ENCODE measurements at regions of chr5 and their contacts with region 1.

Region 1: DNA sequence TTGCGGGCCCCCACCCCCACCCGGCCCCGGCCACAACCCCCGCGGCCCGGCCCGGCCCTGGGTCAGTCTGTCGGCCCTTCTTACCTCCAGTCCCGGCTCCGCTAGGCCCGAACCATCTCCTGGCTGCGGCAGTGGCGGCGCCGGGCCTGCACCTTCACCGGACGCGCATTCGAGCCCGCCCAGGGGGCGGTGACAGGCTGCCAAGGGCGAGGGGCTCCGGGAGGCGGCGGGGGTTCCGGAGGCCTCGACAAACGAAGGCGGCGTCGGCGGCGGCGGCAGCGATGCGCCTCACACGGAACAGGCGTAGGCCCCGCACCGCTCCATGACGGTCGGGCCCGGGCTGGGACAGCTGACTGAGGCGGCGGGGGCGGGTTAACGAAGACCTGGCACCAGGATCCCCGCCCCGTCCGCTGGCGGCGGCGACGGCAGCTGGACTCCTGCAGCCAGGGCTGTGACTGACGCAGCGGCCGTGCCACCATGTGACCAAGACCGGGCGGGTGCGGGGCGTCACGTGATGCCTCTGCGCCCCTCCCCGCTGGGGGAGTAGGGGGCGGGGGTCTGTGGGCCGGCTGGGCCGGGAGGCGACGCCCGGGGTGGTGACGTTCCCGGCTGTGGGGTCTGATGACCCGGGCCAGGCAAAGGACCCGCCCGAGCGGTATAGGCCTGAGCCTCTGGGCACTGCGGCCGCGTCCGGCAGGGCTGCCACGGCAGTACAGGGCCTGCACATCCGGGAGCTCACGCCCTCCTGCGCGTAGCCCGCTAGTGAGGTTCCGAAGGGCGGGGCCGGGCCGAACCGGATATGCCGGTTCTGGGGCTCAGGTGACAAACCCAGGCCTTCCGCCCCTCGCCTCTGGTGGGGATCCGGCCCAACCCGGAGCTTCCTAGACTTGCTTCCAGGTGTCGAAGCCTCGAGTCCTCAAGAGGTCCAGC is at the start of gene AFF4:
- DNase-seq: peak; percentile 93
- ATAC-seq: peak; percentile 89
- H3K4me3 Mint-ChIP-seq: peak within 1 kb of the TSS; percentile 95
- H3K27ac Mint-ChIP-seq: peak within 1 kb of the TSS; percentile 99
- H3K4me1 Mint-ChIP-seq: peaks cover 26% of the 10 kb centered on the region
- H3K27me3 Mint-ChIP-seq: no peaks in the 10 kb centered on the region
- CTCF ChIP-seq: no peak
- total RNA-seq, gene AFF4: 19.4 to 19.9 TPM

Region 2: DNA sequence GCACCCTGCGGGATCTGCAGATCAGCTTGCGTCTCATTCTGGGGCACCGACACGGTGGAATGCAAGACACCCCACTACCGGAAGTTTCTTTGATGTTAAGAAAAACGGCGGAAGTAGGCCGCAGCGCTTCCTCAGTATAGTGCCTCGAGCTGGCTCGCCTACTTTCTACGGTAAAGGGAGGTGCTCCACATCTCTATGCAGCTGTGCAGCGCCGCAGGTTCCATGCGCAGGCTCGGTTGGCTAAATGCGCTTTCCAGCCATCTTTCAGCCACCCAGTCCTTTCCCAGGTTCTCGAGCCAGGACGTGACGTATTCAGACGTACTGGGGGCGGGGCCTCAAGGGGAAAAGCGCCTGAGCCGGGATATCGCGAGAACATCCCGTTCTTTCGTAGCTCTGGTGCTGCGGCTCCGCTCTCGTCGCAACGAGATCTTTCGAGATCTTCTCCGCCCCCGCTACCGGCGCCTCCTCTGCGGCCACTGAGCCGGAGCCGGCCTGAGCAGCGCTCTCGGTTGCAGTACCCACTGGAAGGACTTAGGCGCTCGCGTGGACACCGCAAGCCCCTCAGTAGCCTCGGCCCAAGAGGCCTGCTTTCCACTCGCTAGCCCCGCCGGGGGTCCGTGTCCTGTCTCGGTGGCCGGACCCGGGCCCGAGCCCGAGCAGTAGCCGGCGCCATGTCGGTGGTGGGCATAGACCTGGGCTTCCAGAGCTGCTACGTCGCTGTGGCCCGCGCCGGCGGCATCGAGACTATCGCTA is 88.3 kb after region 1 on chr5 and contains the start of gene HSPA4:
- CTCF ChIA-PET with region 1: interaction called, 3 read pairs
- POLR2A ChIA-PET with region 1: interaction called, 23 read pairs
- intact Hi-C with region 1: no loop called
- DNase-seq: peak; percentile 99
- ATAC-seq: peak; percentile 90
- H3K4me3 Mint-ChIP-seq: peak within 1 kb of the TSS; percentile 86
- H3K27ac Mint-ChIP-seq: peak within 1 kb of the TSS; percentile 99
- H3K4me1 Mint-ChIP-seq: peaks cover 46% of the 10 kb centered on the region
- H3K27me3 Mint-ChIP-seq: no peaks in the 10 kb centered on the region
- CTCF ChIP-seq: no peak
- total RNA-seq, gene HSPA4: 229 to 232 TPM

Region 3: GRCh38 chr5:133063965-133064364 is 100.5 kb after region 1 on chr5:
- CTCF ChIA-PET with region 1: no interaction called
- POLR2A ChIA-PET with region 1: no interaction called
- intact Hi-C with region 1: no loop called
- DNase-seq: no peak
- ATAC-seq: no peak
- H3K4me3 Mint-ChIP-seq: no peak overlapping the region
- H3K27ac Mint-ChIP-seq: no peak overlapping the region
- H3K4me1 Mint-ChIP-seq: peaks cover 29% of the 10 kb centered on the region
- H3K27me3 Mint-ChIP-seq: no peaks in the 10 kb centered on the region
- CTCF ChIP-seq: no peak